Activated T-helper 2 cell treated with anti-CD3 and anti-CD28 coated beads, Interferon-gamma antibody, Interleukin-2, Interleukin-4, amounts not matched to agents 10 μg/mL and 5 μg/mL and 100 μg/mL, durations not matched to agents 14 hours and 24 hours and 36 hours (primary cell): ENCODE measurements at regions of chr7 and their contacts with region 1.

Region 1: DNA sequence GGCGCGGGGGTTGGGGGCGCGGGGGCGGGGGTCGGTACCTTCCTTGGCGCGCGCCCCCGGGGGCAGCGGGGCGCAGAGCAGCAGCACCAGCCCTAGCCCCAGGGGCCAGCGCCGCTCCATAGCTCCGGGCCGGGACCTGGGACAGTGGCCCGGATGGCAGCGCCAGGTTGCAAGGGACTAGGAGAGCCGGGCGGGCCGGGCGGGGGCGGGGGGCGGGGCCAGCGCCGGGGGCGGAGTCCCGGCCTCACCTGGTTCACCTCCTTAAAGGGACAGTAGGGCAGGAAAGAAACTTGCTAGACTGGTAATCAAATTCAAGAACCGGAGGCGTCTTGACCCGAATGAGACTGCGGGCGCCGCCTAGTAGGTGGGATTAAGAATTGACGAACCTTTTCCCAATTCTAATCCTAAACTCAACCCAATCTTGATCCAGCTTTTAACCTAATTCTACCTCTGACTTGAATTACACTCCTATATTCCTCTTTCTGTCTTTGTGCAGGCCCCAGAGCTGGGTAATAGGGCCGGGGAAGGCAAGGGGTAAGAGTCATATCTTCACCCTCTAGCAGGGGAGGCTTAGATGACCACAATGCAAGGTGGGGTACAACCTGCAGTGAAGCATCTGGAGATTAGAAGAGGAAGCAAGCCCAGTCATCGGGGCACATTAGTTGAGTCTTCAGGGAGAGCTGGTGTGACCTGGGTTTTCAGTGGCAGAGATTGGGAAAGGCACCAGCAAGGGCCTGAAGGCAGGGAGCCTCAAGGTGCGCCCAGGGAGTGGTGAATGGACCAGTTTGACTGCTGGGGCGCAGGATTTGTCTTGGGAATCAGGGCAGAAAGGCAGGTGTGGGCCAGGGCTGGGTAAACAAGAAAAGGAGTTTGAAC is at the start of gene EPHA1:
- DNase-seq: no peak
- H3K4me3 Mint-ChIP-seq: peak within 1 kb of the TSS; percentile 45
- H3K27ac Mint-ChIP-seq: no peak within 1 kb of the TSS
- H3K4me1 Mint-ChIP-seq: peaks cover 23% of the 10 kb centered on the region
- H3K27me3 Mint-ChIP-seq: peaks cover 32% of the 10 kb centered on the region
- total RNA-seq, gene EPHA1: 0.07 and 0.34 TPM in 2 replicates

Region 2: GRCh38 chr7:143362131-143363015 is 46.6 kb before region 1 on chr7 and contains the start of gene FAM131B:
- intact Hi-C with region 1: no loop called
- DNase-seq: no peak
- H3K4me3 Mint-ChIP-seq: peak within 1 kb of the TSS; percentile 81
- H3K27ac Mint-ChIP-seq: no peak within 1 kb of the TSS
- H3K4me1 Mint-ChIP-seq: peaks cover 9% of the 10 kb centered on the region
- H3K27me3 Mint-ChIP-seq: peaks cover 73% of the 10 kb centered on the region
- total RNA-seq, gene FAM131B: 1.3 and 2.0 TPM in 2 replicates

Region 3: GRCh38 chr7:143385891-143386781 is 22.8 kb before region 1 on chr7:
- intact Hi-C with region 1: loop called (anchors 2 kb)
- DNase-seq: peak; percentile 40
- H3K4me3 Mint-ChIP-seq: no peak overlapping the region
- H3K27ac Mint-ChIP-seq: no peak overlapping the region
- H3K4me1 Mint-ChIP-seq: peaks cover 19% of the 10 kb centered on the region
- H3K27me3 Mint-ChIP-seq: no peaks in the 10 kb centered on the region

Region 4: GRCh38 chr7:143396182-143396581 is 12.7 kb before region 1 on chr7:
- intact Hi-C with region 1: no loop called
- DNase-seq: no peak
- H3K4me3 Mint-ChIP-seq: no peak overlapping the region
- H3K27ac Mint-ChIP-seq: no peak overlapping the region
- H3K4me1 Mint-ChIP-seq: no peaks in the 10 kb centered on the region
- H3K27me3 Mint-ChIP-seq: peaks cover 5% of the 10 kb centered on the region

Region 5: DNA sequence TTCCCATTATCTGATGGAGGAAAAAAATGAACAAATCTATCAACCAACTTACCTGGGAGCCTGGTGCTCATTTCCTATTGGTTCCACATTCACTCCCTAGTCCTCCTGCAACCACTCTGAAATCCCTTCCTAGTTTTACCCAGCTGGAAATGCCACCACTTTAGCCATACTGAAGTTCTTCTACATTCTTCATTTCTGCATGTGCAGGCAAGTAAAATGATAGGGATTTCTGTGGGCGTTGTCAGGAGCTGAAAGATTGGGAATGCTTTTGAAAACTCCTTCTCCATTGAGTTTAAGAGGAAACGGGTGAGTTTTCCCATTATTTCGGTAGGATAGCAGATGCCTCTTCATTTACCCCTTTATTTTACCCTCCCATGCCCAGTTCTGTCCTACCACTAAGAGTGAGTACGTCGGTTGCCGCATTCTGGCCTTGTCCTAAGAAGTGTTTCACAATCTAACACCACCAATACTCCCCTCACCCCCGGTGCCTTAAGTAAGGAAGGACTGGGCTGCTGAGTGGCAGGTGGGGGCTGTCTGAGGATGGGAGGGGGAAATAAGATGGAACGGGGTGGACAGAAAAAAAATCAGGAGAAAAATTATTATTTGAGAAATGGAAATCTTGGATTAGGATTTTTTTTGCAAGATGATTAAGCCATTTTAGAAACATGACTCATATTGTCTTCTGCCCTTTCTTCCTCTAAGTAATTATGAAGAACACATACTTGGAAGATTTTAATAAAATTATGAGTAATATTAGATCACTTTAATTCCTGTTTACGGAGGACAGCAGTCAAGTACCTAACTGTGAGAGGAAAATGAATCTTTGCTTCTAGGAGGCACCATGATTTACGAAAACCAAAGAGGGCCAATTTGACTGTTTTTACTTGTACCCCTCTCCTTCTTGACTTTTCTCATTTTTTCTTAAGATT is 21.1 kb after region 1 on chr7:
- intact Hi-C with region 1: no loop called
- DNase-seq: no peak
- H3K4me3 Mint-ChIP-seq: no peak overlapping the region
- H3K27ac Mint-ChIP-seq: no peak overlapping the region
- H3K4me1 Mint-ChIP-seq: peaks cover 5% of the 10 kb centered on the region
- H3K27me3 Mint-ChIP-seq: peaks cover 9% of the 10 kb centered on the region